PC-9 (cell line): ENCODE measurements at regions of chr18 and their contacts with region 1.

Region 1: GRCh38 chr18:32470713-32471633 is at the start of gene GAREM1:
- DNase-seq: peak; percentile 87 to 92
- H3K4me3 ChIP-seq: peak within 1 kb of the TSS; percentile 77
- H3K27ac ChIP-seq: peak within 1 kb of the TSS; percentile 30
- H3K4me1 ChIP-seq: peaks cover 20% of the 10 kb centered on the region
- H3K27me3 ChIP-seq: no peaks in the 10 kb centered on the region
- CTCF ChIP-seq: peak; percentile 44
- total RNA-seq, gene GAREM1: 6.1 and 10.2 TPM in 2 replicates

Region 2: GRCh38 chr18:32271672-32272208 is 199.2 kb before region 1 on chr18:
- CTCF ChIA-PET with region 1: interaction called, 28 read pairs
- POLR2A ChIA-PET with region 1: no interaction called
- intact Hi-C with region 1: loop called (anchors 2 kb)
- DNase-seq: peak in 1 of 2 experiments; percentile 12
- H3K4me3 ChIP-seq: no peak overlapping the region
- H3K27ac ChIP-seq: no peak overlapping the region
- H3K4me1 ChIP-seq: no peaks in the 10 kb centered on the region
- H3K27me3 ChIP-seq: no peaks in the 10 kb centered on the region
- CTCF ChIP-seq: peak; percentile 79

Region 3: DNA sequence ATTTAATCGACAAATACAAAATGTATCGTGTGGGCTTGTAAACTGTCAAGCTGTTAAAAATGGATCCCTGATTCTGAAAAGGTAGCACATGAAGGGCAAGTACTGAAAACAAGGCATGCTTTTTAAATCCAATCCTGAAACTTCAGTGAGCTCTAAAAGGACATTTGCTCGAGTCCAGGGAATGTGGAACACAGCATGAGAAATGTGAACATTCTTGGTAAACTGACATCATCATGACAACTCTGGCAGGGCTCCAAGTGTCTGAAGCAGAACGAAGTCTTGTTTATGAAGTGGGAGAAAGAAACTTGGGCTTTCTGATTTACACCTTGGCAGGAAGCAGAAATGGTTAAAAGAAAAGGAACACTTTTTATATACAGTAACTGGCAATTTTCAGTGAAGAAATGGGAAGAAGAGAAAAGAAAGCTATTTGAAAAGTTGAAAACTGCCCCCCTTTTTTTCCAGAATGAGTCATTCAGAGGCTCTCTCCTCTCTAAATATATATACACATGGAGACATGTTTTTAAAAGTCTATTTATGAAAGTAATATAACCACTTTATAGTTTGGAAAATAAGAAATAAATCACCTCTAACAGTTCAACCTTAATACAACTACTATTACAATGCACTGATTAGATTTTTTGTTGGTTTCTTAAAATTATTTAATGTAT is 121.1 kb before region 1 on chr18:
- CTCF ChIA-PET with region 1: no interaction called
- POLR2A ChIA-PET with region 1: interaction called, 12 read pairs
- intact Hi-C with region 1: no loop called
- DNase-seq: peak; percentile 51 to 73
- H3K4me3 ChIP-seq: peak overlapping the region; percentile 30; the same call in 1 of the 2 replicates
- H3K27ac ChIP-seq: peak overlapping the region; percentile 61
- H3K4me1 ChIP-seq: peaks cover 19% of the 10 kb centered on the region
- H3K27me3 ChIP-seq: no peaks in the 10 kb centered on the region
- CTCF ChIP-seq: no peak

Region 4: GRCh38 chr18:32552421-32553030 is 81.6 kb after region 1 on chr18:
- CTCF ChIA-PET with region 1: interaction called, 3 read pairs
- POLR2A ChIA-PET with region 1: no interaction called
- intact Hi-C with region 1: loop called (anchors 5 kb)
- DNase-seq: peak; percentile 10 to 48
- H3K4me3 ChIP-seq: no peak overlapping the region
- H3K27ac ChIP-seq: no peak overlapping the region
- H3K4me1 ChIP-seq: no peaks in the 10 kb centered on the region
- H3K27me3 ChIP-seq: no peaks in the 10 kb centered on the region
- CTCF ChIP-seq: peak; percentile 74